ENCODE measurements at regions of chr1 and their contacts with region 1.

Region 1: DNA sequence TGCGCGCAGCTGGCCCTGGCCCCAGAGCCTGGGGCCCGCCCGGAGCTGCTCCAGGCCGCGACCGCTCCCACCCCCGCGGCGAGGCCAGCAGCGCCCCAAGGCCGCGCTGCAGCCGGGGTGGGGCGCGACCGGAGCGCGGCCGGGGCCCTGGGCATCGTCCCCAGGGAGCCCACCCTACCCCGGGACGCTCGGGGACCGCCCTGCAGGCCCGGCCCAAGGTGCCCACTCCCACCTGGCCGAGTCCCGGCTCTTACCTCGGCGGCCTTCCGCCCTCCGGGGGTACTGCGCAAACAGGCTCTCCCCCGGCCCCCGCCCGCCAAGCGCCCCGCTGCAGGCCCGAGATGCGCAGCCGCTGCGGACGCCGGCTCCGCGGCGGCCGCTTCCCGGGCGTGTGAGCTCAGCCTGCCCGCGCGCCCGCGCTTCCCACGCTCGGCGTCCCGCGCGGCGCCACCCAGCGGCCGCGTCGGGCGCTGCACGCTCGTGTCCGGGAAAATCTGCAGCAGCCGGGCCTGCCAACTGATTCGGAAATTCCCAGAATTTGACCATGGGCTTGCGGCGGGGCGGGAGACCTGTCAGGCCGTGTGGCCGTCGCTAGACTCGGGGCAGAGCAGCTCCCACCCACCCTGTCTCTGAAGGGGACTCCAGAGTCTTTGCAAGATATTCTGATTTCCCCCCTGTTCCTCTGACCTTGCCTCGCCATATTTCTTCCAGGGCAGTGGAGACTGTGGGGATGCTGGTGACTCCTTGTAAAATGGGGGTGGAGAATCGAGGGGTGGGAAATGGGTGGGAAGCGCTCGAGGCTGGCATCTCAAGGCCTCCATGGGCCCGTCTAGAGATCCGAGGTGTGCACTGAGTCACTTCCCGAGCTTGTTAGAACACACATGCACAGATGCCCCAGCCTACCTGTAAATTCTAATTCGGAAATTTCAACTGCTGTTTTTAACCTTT is 41.9 kb downstream of the CD34 start:
- DNase-seq: peak; percentile 74
- ATAC-seq: peak; percentile 83
- H3K4me3 Mint-ChIP-seq: peak overlapping the region; percentile 91
- H3K27ac Mint-ChIP-seq: peak overlapping the region; percentile 86
- H3K4me1 Mint-ChIP-seq: peaks cover 86% of the 10 kb centered on the region
- H3K27me3 Mint-ChIP-seq: no peaks in the 10 kb centered on the region
- CTCF ChIP-seq: peak; percentile 34

Region 2: GRCh38 chr1:207811920-207812720 is 56.9 kb before region 1 on chr1:
- CTCF ChIA-PET with region 1: interaction called, 17 read pairs
- POLR2A ChIA-PET with region 1: interaction called, 9 read pairs
- intact Hi-C with region 1: no loop called
- DNase-seq: no peak
- ATAC-seq: no peak
- H3K4me3 Mint-ChIP-seq: no peak overlapping the region
- H3K27ac Mint-ChIP-seq: no peak overlapping the region
- H3K4me1 Mint-ChIP-seq: peaks cover 90% of the 10 kb centered on the region
- H3K27me3 Mint-ChIP-seq: no peaks in the 10 kb centered on the region
- CTCF ChIP-seq: no peak

Region 3: GRCh38 chr1:207910591-207911354 is 41.7 kb after region 1 on chr1 and contains the start of gene CD34:
- CTCF ChIA-PET with region 1: no interaction called
- POLR2A ChIA-PET with region 1: no interaction called
- intact Hi-C with region 1: no loop called
- DNase-seq: no peak
- ATAC-seq: no peak
- H3K4me3 Mint-ChIP-seq: peak within 1 kb of the TSS; percentile 26
- H3K27ac Mint-ChIP-seq: no peak within 1 kb of the TSS
- H3K4me1 Mint-ChIP-seq: peaks cover 19% of the 10 kb centered on the region
- H3K27me3 Mint-ChIP-seq: peaks cover 56% of the 10 kb centered on the region
- CTCF ChIP-seq: no peak
- total RNA-seq, gene CD34: not detected in 2 replicates

Region 4: GRCh38 chr1:207963427-207964194 is 94.6 kb after region 1 on chr1:
- CTCF ChIA-PET with region 1: interaction called, 11 read pairs
- POLR2A ChIA-PET with region 1: interaction called, 3 read pairs
- intact Hi-C with region 1: no loop called
- DNase-seq: peak; percentile 89
- ATAC-seq: peak; percentile 95
- H3K4me3 Mint-ChIP-seq: peak overlapping the region; percentile 87
- H3K27ac Mint-ChIP-seq: no peak overlapping the region
- H3K4me1 Mint-ChIP-seq: peaks cover 17% of the 10 kb centered on the region
- H3K27me3 Mint-ChIP-seq: peaks cover 28% of the 10 kb centered on the region
- CTCF ChIP-seq: peak; percentile 54

Measured in activated B cell treated with CpG ODN at 0.5 μM for 24 hours (primary cell).